ENCODE measurements at regions of chr5 and their contacts with region 1.

Region 1: DNA sequence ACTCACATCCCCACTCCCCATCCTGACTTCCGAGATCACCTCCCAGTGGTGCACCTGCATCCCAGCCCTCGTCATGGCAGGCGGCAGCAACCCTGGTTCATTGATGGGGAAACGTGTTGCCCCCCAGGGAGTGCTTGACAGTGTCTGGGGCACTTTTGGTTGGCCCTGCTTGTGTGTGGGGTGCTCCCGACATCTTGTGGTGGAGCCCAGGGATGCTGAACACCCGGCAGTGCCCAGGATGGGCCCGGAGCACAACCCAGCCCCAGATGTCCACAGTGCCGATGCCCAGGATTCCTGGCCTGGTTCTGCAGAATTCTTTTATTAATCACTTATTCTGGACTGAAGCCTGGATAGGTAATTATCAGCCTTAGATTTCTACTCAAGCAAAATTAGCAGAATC is 3.7 kb downstream of the MRPL36 start:
- DNase-seq: no peak
- H3K4me3 ChIP-seq: no peak overlapping the region
- H3K27ac ChIP-seq: no peak overlapping the region
- H3K4me1 ChIP-seq: peaks cover 6% of the 10 kb centered on the region
- H3K27me3 ChIP-seq: no peaks in the 10 kb centered on the region
- CTCF ChIP-seq: no peak

Region 2: GRCh38 chr5:1658665-1659064 is 137.3 kb before region 1 on chr5:
- CTCF ChIA-PET with region 1: interaction called, 14 read pairs
- POLR2A ChIA-PET with region 1: no interaction called
- intact Hi-C with region 1: no loop called
- DNase-seq: no peak
- H3K4me3 ChIP-seq: no peak overlapping the region
- H3K27ac ChIP-seq: no peak overlapping the region
- H3K4me1 ChIP-seq: no peaks in the 10 kb centered on the region
- H3K27me3 ChIP-seq: peaks cover 95% of the 10 kb centered on the region
- CTCF ChIP-seq: no peak

Measured in PC-9 (cell line).